CD4-positive, alpha-beta T cell (primary cell): ENCODE measurements at regions of chr15 and their contacts with region 1.

Region 1: DNA sequence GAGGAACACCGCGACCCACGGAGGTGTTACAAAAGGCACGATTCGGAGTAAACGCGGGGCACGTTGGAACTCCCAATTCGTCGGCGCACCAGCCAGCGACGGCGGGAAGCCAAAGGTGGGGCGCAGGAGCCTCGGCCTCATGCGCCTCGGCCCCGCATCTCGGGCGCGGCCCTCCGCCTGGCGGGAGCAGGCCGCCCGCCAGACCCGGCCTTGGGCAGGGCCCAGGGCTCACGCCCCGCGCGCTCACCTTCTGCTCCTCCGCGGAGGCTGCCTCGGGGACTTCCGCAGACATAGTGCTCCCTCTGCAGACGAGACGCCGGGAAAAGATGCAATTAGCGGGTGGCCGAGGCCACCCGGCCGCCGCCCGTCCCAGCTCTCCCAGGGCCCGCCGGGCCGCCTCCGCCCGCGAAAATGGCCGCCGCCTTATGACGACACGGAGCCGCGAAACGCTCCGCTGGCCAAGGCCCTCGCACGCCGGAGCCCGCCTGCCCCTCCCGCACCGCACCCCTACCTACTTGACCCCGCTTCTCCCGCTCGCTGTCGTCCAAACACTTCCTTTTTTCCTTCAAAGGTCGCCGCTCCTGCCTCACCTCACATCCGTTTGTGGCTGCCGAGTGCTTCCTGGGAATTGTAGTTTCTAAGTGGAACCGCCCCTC is at the start of gene ARPP19:
- DNase-seq: peak; percentile 60 to 93 (median 71)
- ATAC-seq: peak; percentile 72
- H3K4me3 ChIP-seq: peak within 1 kb of the TSS; percentile 75
- H3K4me3 Mint-ChIP-seq: peak within 1 kb of the TSS; percentile 99
- H3K27ac ChIP-seq: peak within 1 kb of the TSS; percentile 91 to 93
- H3K27ac Mint-ChIP-seq: peak within 1 kb of the TSS; percentile 98
- H3K4me1 ChIP-seq: peaks cover 35% of the 10 kb centered on the region
- H3K4me1 Mint-ChIP-seq: peaks cover 45% of the 10 kb centered on the region
- H3K27me3 ChIP-seq: no peaks in the 10 kb centered on the region
- H3K27me3 Mint-ChIP-seq: no peaks in the 10 kb centered on the region
- CTCF ChIP-seq: peak; percentile 24
- total RNA-seq, gene ARPP19: 134 to 146 TPM

Region 2: GRCh38 chr15:52256366-52256765 is 312.4 kb before region 1 on chr15:
- CTCF ChIA-PET with region 1: no interaction called
- POLR2A ChIA-PET with region 1: no interaction called
- intact Hi-C with region 1: loop called in 1 of 2 experiments (anchors 5 kb)
- DNase-seq: peak; percentile 58 to 90 (median 72)
- ATAC-seq: peak; percentile 96
- H3K4me3 ChIP-seq: no peak overlapping the region
- H3K4me3 Mint-ChIP-seq: peak overlapping the region; percentile 79
- H3K27ac ChIP-seq: no peak overlapping the region
- H3K27ac Mint-ChIP-seq: peak overlapping the region; percentile 34
- H3K4me1 ChIP-seq: peaks cover 14% of the 10 kb centered on the region
- H3K4me1 Mint-ChIP-seq: peaks cover 12% of the 10 kb centered on the region
- H3K27me3 ChIP-seq: no peaks in the 10 kb centered on the region
- H3K27me3 Mint-ChIP-seq: no peaks in the 10 kb centered on the region
- CTCF ChIP-seq: peak; percentile 76

Region 3: GRCh38 chr15:52518490-52519371 is 50.0 kb before region 1 on chr15:
- CTCF ChIA-PET with region 1: no interaction called
- POLR2A ChIA-PET with region 1: no interaction called
- intact Hi-C with region 1: no loop called
- DNase-seq: no peak
- ATAC-seq: no peak
- H3K4me3 ChIP-seq: no peak overlapping the region
- H3K4me3 Mint-ChIP-seq: no peak overlapping the region
- H3K27ac ChIP-seq: no peak overlapping the region
- H3K27ac Mint-ChIP-seq: peak overlapping the region; percentile 1
- H3K4me1 ChIP-seq: peaks cover 6% of the 10 kb centered on the region
- H3K4me1 Mint-ChIP-seq: peaks cover 38% of the 10 kb centered on the region
- H3K27me3 ChIP-seq: no peaks in the 10 kb centered on the region
- H3K27me3 Mint-ChIP-seq: no peaks in the 10 kb centered on the region
- CTCF ChIP-seq: no peak